Pancreas (tissue), 10 donors: ENCODE measurements at regions of chr5 and their contacts with region 1.

Region 1: GRCh38 chr5:103364074-103364473 is 105.5 kb downstream of the MACIR start:
- DNase-seq: no peak
- ATAC-seq: no peak
- H3K4me3 ChIP-seq: no peak overlapping the region
- H3K27ac ChIP-seq: no peak overlapping the region
- H3K4me1 ChIP-seq: no peaks in the 10 kb centered on the region
- H3K27me3 ChIP-seq: no peaks in the 10 kb centered on the region
- CTCF ChIP-seq: no peak

Region 2: DNA sequence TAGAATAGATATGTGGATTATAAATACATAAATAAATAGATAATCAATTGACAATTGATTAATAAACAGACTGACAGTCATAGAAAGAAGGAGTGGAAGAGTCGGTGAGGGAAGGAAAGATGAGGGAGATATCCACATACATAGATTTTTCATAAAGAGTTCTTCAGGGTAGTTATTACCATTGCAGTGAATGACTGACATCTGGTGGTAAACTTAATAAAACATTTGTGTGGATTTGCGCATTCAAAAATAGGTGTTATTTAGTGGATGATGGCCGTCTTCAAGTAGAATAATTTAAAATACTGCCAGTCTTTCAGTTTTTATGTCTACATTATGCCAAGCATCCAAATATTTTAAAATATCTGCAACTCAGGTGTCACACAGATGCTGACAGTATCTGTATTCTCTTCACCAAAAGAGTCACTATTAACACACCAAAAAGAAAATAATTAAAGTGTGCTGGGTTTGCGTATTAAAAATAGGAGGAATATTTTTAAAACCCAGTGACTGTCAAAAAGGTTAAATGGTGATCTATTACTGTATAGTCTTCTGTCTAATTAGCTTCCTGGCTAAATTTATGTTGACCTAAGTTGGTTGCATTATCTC is 322.9 kb before region 1 on chr5:
- intact Hi-C with region 1: no loop called
- DNase-seq: no peak
- ATAC-seq: peak in 3 of 4 donors; percentile 46 to 70 (median 55)
- H3K4me3 ChIP-seq: no peak overlapping the region
- H3K27ac ChIP-seq: no peak overlapping the region
- H3K4me1 ChIP-seq: no peaks in the 10 kb centered on the region
- H3K27me3 ChIP-seq: no peaks in the 10 kb centered on the region
- CTCF ChIP-seq: peak in 3 of 4 donors; percentile 13 to 43 (median 23)

Region 3: GRCh38 chr5:103258368-103258956 is 105.6 kb before region 1 on chr5 and contains the start of gene MACIR:
- intact Hi-C with region 1: loop called in 1 of 3 experiments (anchors 10 kb)
- DNase-seq: peak; percentile 95 to 98 (median 98)
- ATAC-seq: peak; percentile 93 to 97 (median 96)
- H3K4me3 ChIP-seq: peak within 1 kb of the TSS; percentile 79 to 93 (median 89)
- H3K27ac ChIP-seq: peak within 1 kb of the TSS; percentile 77 to 91 (median 88)
- H3K4me1 ChIP-seq: peaks cover 3 to 27% (median 17%) of the 10 kb centered on the region in 3 donors
- H3K27me3 ChIP-seq: no peaks in the 10 kb centered on the region
- CTCF ChIP-seq: no peak
- total RNA-seq, gene MACIR: 2.4 to 8.0 (median 3.2) TPM